Psoas muscle (tissue), 8 donors: ENCODE measurements at regions of chr11 and their contacts with region 1.

Region 1: GRCh38 chr11:107354780-107355179 is 102.8 kb downstream of the CWF19L2 start:
- DNase-seq: no peak
- ATAC-seq: no peak
- H3K4me3 ChIP-seq: no peak overlapping the region
- H3K27ac ChIP-seq: no peak overlapping the region
- H3K4me1 ChIP-seq: no peaks in the 10 kb centered on the region
- H3K27me3 ChIP-seq: no peaks in the 10 kb centered on the region
- CTCF ChIP-seq: no peak

Region 2: DNA sequence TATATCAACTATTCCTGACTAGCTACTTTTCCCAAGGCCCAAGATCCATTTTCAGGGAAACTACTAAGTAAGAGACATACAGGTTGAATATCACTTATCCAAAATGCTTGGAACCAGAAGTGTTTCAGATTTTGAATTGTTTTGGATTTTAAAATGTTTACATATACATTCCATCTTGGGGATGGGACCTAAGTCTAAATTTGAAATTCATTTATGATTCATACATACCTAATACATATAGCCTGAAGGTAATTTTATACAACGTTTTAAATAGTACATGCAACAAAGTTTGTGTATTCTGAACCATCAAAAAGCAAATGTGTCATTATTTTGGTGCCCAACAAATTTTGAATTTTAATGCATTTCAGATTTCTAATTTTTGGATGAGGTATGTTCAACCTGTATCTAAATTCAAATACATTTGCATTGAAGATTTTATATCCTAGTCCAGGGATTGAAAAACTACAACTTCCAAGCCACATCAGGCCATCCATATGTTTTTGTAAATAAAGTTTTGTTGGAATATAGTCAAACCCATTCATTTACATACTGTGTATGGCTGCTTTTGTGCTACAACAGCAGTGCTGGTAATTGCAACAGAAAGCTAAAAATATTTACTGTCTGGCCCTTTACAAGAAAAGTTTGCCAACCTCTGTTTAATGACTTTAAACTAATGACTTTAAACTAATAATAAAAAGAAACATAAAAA is 29.5 kb after region 1 on chr11:
- intact Hi-C with region 1: loop called in 1 of 2 experiments (anchors 5 kb)
- DNase-seq: no peak
- ATAC-seq: no peak
- H3K4me3 ChIP-seq: no peak overlapping the region
- H3K27ac ChIP-seq: no peak overlapping the region
- H3K4me1 ChIP-seq: no peaks in the 10 kb centered on the region
- H3K27me3 ChIP-seq: no peaks in the 10 kb centered on the region
- CTCF ChIP-seq: no peak